GM12878 (cell line): ENCODE measurements at regions of chr15 and their contacts with region 1.

Region 1: DNA sequence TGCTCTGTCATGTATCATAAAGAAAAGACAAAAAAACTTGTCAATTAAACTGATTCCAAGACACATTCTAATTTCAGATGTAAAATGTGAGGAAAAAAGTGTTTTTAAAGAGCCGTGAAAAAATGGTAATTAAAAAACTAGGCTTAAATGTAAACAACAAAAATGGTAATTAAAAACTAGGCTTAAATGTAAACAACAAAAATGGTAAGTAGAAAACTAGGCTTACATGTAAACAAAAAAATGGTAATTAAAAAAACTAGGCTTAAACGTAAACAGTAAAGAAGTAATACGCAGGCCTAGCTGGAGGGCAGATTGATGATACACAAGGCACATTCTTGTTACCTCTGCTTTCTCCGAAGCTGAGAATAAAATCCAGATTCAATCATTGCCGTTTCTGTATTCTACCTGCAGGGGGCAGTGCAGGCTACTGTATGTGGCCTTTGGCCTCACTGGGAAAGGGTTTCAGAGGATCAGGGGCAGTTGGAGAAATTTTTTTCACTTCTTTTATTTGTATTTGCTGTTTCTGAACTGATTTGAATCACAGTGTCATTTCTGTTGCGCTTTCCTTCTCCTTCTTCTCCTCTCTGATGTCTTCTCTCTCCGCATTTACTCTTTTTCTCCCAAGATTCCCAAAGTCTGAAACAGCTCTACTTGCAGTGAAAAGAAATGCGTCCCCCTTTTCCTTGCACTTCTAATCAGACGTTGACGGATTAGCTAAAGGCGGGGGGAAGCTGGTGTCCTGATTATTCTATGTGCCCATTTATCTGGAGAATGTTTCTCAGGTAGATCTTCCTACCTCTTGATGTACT is 67.2 kb upstream of the MCTP2 start:
- DNase-seq: no peak
- ATAC-seq: peak; percentile 82
- H3K4me3 ChIP-seq: no peak overlapping the region
- H3K27ac ChIP-seq: no peak overlapping the region
- H3K4me1 ChIP-seq: no peaks in the 10 kb centered on the region
- H3K27me3 ChIP-seq: no peaks in the 10 kb centered on the region
- CTCF ChIP-seq: peak; percentile 69 to 83 (median 80)
- EP300 ChIP-seq: no peak
- POLR2A ChIP-seq: no peak
- RAD21 ChIP-seq: peak; percentile 97

Region 2: DNA sequence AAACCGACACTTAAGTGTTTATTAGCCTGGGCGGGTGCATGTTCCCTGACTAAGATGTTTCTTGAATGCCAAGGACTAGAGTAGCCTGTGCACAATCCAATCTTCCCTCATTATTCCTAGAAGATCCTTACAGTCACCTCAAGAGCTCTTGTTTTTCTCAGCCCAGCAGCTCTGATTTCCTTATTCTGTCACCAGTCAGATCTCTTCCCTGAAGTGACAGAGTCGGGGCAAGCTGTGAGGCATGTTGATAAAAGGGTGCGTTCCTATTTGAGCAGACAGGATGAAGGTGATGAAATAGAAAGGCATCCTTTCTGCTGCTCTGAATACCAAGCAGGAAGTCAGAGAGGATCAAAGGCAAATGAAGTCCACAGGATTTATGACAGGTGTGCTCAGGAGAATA is 58.4 kb before region 1 on chr15:
- CTCF ChIA-PET with region 1: no interaction called
- POLR2A ChIA-PET with region 1: no interaction called
- RAD21 ChIA-PET with region 1: no interaction called
- SMC1A ChIA-PET with region 1: no interaction called
- in situ Hi-C with region 1: no loop called
- intact Hi-C with region 1: no loop called
- DNase-seq: no peak
- ATAC-seq: no peak
- H3K4me3 ChIP-seq: no peak overlapping the region
- H3K27ac ChIP-seq: no peak overlapping the region
- H3K4me1 ChIP-seq: no peaks in the 10 kb centered on the region
- H3K27me3 ChIP-seq: no peaks in the 10 kb centered on the region
- CTCF ChIP-seq: no peak
- EP300 ChIP-seq: no peak
- POLR2A ChIP-seq: no peak
- RAD21 ChIP-seq: no peak

Region 3: GRCh38 chr15:94225616-94226015 is 61.4 kb after region 1 on chr15:
- CTCF ChIA-PET with region 1: interaction called, 30 read pairs
- POLR2A ChIA-PET with region 1: interaction called, 3 read pairs
- RAD21 ChIA-PET with region 1: interaction called, 18 read pairs
- SMC1A ChIA-PET with region 1: interaction called, 45 read pairs
- in situ Hi-C with region 1: no loop called
- intact Hi-C with region 1: loop called (anchors 2 kb)
- DNase-seq: no peak
- ATAC-seq: no peak
- H3K4me3 ChIP-seq: no peak overlapping the region
- H3K27ac ChIP-seq: no peak overlapping the region
- H3K4me1 ChIP-seq: peaks cover 7% of the 10 kb centered on the region
- H3K27me3 ChIP-seq: peaks cover 0 to 2% of the 10 kb centered on the region in 2 experiments; a peak in 1 of 4 replicates
- CTCF ChIP-seq: no peak
- EP300 ChIP-seq: no peak
- POLR2A ChIP-seq: no peak
- RAD21 ChIP-seq: no peak

Region 4: GRCh38 chr15:94287794-94288246 is 123.6 kb after region 1 on chr15:
- CTCF ChIA-PET with region 1: interaction called, 23 read pairs
- POLR2A ChIA-PET with region 1: no interaction called
- RAD21 ChIA-PET with region 1: interaction called, 12 read pairs
- SMC1A ChIA-PET with region 1: interaction called, 28 read pairs
- in situ Hi-C with region 1: no loop called
- intact Hi-C with region 1: no loop called
- DNase-seq: peak; percentile 66
- ATAC-seq: peak; percentile 97
- H3K4me3 ChIP-seq: no peak overlapping the region
- H3K27ac ChIP-seq: peak overlapping the region; percentile 47; the same call in 1 of the 2 replicates
- H3K4me1 ChIP-seq: peaks cover 15% of the 10 kb centered on the region
- H3K27me3 ChIP-seq: no peaks in the 10 kb centered on the region
- CTCF ChIP-seq: peak in 1 of 3 experiments; percentile 18; a peak in 1 of 6 replicates
- EP300 ChIP-seq: peak; percentile 74 to 91; a peak in 3 of 4 replicates
- POLR2A ChIP-seq: no peak
- RAD21 ChIP-seq: no peak

Region 5: GRCh38 chr15:94317201-94317600 is 153.0 kb after region 1 on chr15:
- CTCF ChIA-PET with region 1: interaction called, 417 read pairs
- POLR2A ChIA-PET with region 1: interaction called, 3 read pairs
- RAD21 ChIA-PET with region 1: interaction called, 268 read pairs
- SMC1A ChIA-PET with region 1: interaction called, 266 read pairs
- in situ Hi-C with region 1: loop called (anchors 5 kb)
- intact Hi-C with region 1: no loop called
- DNase-seq: no peak
- ATAC-seq: no peak
- H3K4me3 ChIP-seq: no peak overlapping the region
- H3K27ac ChIP-seq: no peak overlapping the region
- H3K4me1 ChIP-seq: no peaks in the 10 kb centered on the region
- H3K27me3 ChIP-seq: no peaks in the 10 kb centered on the region
- CTCF ChIP-seq: no peak
- EP300 ChIP-seq: no peak
- POLR2A ChIP-seq: no peak
- RAD21 ChIP-seq: no peak

Region 6: GRCh38 chr15:94467034-94467433 is 302.8 kb after region 1 on chr15:
- CTCF ChIA-PET with region 1: interaction called, 8 read pairs
- POLR2A ChIA-PET with region 1: no interaction called
- RAD21 ChIA-PET with region 1: interaction called, 12 read pairs
- SMC1A ChIA-PET with region 1: interaction called, 8 read pairs
- in situ Hi-C with region 1: no loop called
- intact Hi-C with region 1: no loop called
- DNase-seq: no peak
- ATAC-seq: no peak
- H3K4me3 ChIP-seq: no peak overlapping the region
- H3K27ac ChIP-seq: no peak overlapping the region
- H3K4me1 ChIP-seq: no peaks in the 10 kb centered on the region
- H3K27me3 ChIP-seq: no peaks in the 10 kb centered on the region
- CTCF ChIP-seq: 0 out of 6 replicates have a peak, but pooled peaks of 1 of the 3 experiments have one; percentile 0
- EP300 ChIP-seq: no peak
- POLR2A ChIP-seq: no peak
- RAD21 ChIP-seq: no peak